ENCODE measurements at regions of chr13 and their contacts with region 1.

Region 1: GRCh38 chr13:97280478-97280877 is 58.3 kb downstream of the MBNL2 start:
- DNase-seq: no peak
- H3K4me3 ChIP-seq: no peak overlapping the region
- H3K27ac ChIP-seq: peak overlapping the region; percentile 64 to 79 (median 74)
- H3K4me1 ChIP-seq: peaks cover 20 to 72% (median 40%) of the 10 kb centered on the region in 4 donors
- H3K27me3 ChIP-seq: no peaks in the 10 kb centered on the region
- CTCF ChIP-seq: no peak
- EP300 ChIP-seq: no peak
- POLR2A ChIP-seq: no peak

Region 2: GRCh38 chr13:97339019-97339987 is 58.8 kb after region 1 on chr13:
- in situ Hi-C with region 1: loop called in 1 of 4 experiments (anchors 10 kb)
- intact Hi-C with region 1: loop called (anchors 10 kb)
- DNase-seq: peak; percentile 41
- H3K4me3 ChIP-seq: no peak overlapping the region
- H3K27ac ChIP-seq: peak overlapping the region; percentile 17 to 81 (median 65)
- H3K4me1 ChIP-seq: peaks cover 0 to 43% (median 27%) of the 10 kb centered on the region in 4 donors
- H3K27me3 ChIP-seq: no peaks in the 10 kb centered on the region
- CTCF ChIP-seq: no peak
- EP300 ChIP-seq: no peak
- POLR2A ChIP-seq: no peak